H1 (cell line): ENCODE measurements at regions of chr12 and their contacts with region 1.

Region 1: DNA sequence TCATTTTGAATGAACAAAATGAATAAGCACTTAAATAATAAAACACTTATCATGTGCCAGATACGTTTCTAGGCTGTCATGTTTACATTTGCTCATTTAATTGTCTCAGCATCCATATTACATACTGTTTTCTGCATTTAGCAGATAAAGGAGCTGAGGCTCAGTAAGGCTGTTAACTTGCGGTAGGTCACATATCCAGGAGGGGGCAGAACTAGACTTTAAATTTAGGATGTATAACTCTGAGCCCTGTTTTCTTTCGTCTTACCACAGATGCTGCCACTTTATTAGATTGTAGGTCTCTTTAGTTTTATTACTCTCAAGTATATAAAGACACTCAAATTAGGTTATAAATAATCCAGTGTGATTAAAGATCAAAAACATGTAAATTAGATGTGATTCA is 17.7 kb downstream of the IRAK4 start:
- DNase-seq: no peak
- H3K4me3 ChIP-seq: no peak overlapping the region
- H3K27ac ChIP-seq: no peak overlapping the region
- H3K4me1 ChIP-seq: no peaks in the 10 kb centered on the region
- H3K27me3 ChIP-seq: no peaks in the 10 kb centered on the region
- CTCF ChIP-seq: peak in 2 of 3 experiments; percentile 45 to 60; a peak in 2 of 4 replicates
- EP300 ChIP-seq: no peak
- POLR2A ChIP-seq: no peak
- RAD21 ChIP-seq: peak; percentile 63 to 74

Region 2: DNA sequence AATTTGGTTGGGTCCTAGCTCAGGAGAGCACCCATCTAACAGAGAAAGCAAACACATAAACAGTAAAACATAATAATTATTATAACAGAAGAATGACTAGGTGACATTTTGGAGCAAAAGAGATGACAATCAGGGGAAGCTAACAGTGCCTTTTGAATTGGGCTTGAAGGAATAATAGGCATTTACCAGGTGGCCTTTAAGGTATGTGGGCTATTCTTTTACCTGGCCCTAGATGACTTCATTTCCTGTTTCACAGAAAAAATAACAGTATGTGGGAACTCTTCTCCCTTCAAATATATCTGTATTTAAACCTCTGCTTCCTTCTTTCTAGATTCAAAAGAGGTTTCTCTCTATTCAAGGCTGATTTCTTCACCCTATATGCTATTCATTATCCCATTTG is 13.9 kb before region 1 on chr12:
- CTCF ChIA-PET with region 1: interaction called, 15 read pairs
- POLR2A ChIA-PET with region 1: interaction called, 4 read pairs
- DNase-seq: no peak
- H3K4me3 ChIP-seq: peak overlapping the region in 1 of 4 experiments; percentile 9; a peak in 1 of 8 replicates
- H3K27ac ChIP-seq: peak overlapping the region; percentile 41; the same call in 1 of the 2 replicates
- H3K4me1 ChIP-seq: peaks cover 0 to 15% (median 6%) of the 10 kb centered on the region in 4 experiments; a peak in 5 of 7 replicates
- H3K27me3 ChIP-seq: no peaks in the 10 kb centered on the region
- CTCF ChIP-seq: no peak
- EP300 ChIP-seq: no peak
- POLR2A ChIP-seq: no peak
- RAD21 ChIP-seq: no peak

Region 3: DNA sequence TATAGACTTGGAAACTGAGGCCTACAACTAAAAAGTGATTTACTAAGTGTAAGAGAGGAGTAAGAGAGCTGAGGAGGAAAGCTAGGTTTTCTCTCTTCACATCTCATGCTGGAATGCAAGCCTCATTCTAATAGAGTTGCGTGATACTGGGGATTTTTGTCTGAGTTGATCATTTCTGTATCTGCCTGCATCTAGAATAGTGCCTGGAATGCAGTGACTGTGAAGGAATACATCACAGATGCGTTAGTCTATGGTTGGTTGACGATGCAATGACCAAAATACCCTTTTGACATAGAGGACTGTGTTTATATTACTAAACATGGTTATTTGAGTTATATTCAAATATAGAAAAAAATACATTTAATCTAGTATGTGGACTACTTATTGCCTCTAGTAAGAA is 50.2 kb after region 1 on chr12:
- CTCF ChIA-PET with region 1: no interaction called
- POLR2A ChIA-PET with region 1: no interaction called
- DNase-seq: no peak
- H3K4me3 ChIP-seq: no peak overlapping the region
- H3K27ac ChIP-seq: no peak overlapping the region
- H3K4me1 ChIP-seq: no peaks in the 10 kb centered on the region
- H3K27me3 ChIP-seq: no peaks in the 10 kb centered on the region
- CTCF ChIP-seq: no peak
- EP300 ChIP-seq: no peak
- POLR2A ChIP-seq: no peak
- RAD21 ChIP-seq: no peak

Region 4: GRCh38 chr12:43882578-43883178 is 106.2 kb after region 1 on chr12:
- CTCF ChIA-PET with region 1: interaction called, 113 read pairs
- POLR2A ChIA-PET with region 1: no interaction called
- DNase-seq: no peak
- H3K4me3 ChIP-seq: no peak overlapping the region
- H3K27ac ChIP-seq: no peak overlapping the region
- H3K4me1 ChIP-seq: no peaks in the 10 kb centered on the region
- H3K27me3 ChIP-seq: no peaks in the 10 kb centered on the region
- CTCF ChIP-seq: peak in 2 of 3 experiments; percentile 71 to 78; a peak in 3 of 4 replicates
- EP300 ChIP-seq: no peak
- POLR2A ChIP-seq: no peak
- RAD21 ChIP-seq: peak; percentile 95 to 96